OCI-LY7 (cell line): ENCODE measurements at regions of chr2 and their contacts with region 1.

Region 1: DNA sequence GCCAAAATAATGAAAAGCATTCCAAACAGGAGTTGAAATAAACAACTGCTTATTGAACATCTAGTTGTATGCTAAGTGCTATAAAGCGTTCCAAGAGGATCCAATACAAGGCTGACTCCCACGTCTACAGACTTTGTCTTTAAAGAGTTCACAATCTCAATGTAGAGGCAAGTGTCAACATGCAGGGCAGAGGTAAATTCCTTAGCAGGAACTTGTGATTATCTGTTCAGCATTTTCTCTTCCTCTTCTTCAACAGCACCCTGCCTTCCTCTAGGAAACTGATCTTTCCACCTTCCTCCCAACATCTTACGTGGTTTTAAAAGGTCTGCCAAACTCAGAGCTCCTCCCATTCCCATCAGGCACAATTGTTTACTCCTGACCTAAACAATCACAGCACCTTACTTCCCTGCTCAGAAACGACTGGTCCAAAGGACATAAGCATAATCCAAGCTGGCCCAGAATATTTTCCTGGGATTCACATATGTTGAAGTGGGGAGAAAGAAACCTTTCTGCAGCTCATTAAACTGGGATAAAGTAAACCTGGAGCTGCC is 83.9 kb downstream of the ITSN2 start:
- DNase-seq: no peak
- H3K4me3 ChIP-seq: no peak overlapping the region
- H3K27ac ChIP-seq: no peak overlapping the region
- H3K4me1 ChIP-seq: no peaks in the 10 kb centered on the region
- CTCF ChIP-seq: no peak

Region 2: GRCh38 chr2:24262421-24262970 is 13.9 kb before region 1 on chr2:
- CTCF ChIA-PET with region 1: no interaction called
- POLR2A ChIA-PET with region 1: interaction called, 14 read pairs
- intact Hi-C with region 1: no loop called
- DNase-seq: no peak
- H3K4me3 ChIP-seq: no peak overlapping the region
- H3K27ac ChIP-seq: no peak overlapping the region
- H3K4me1 ChIP-seq: peaks cover 7% of the 10 kb centered on the region
- CTCF ChIP-seq: no peak

Region 3: DNA sequence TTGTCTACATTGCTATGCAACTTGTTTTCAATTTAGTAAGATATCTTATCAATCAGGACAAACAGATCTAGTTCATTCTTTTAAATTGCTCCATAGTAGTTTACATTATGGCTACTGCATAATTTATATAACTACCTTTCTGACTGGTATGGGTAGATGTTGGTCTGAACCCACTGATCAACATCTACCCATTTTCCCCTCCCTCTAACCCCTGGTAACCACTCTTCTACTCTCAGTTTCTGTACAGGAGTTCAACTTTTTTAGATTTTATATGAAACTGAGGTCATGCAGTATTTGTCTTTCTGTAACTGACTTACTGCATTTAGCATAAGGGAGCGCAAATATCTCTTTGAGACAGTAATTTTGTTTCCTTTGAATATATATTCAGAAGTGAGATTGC is 10.7 kb after region 1 on chr2:
- CTCF ChIA-PET with region 1: no interaction called
- POLR2A ChIA-PET with region 1: interaction called, 10 read pairs
- intact Hi-C with region 1: no loop called
- DNase-seq: no peak
- H3K4me3 ChIP-seq: no peak overlapping the region
- H3K27ac ChIP-seq: no peak overlapping the region
- H3K4me1 ChIP-seq: no peaks in the 10 kb centered on the region
- CTCF ChIP-seq: no peak

Region 4: DNA sequence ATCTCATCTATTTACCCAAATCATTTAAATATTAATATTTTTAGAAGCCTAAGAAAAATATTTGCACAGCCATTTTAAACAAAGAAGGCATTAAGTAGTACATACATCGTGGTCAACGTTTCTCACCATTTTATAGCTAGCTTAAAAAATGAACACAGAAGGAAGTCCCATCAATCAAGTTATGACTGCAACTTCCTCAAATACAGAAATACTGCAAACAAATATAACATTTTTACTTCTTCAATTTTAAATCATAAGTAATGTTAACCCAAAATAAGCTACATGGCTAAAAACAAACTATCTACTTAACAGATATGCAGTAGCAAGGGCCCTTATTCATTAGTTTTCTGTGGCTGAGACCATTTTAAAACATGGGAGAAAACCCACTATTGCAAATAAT is 53.3 kb after region 1 on chr2:
- CTCF ChIA-PET with region 1: no interaction called
- POLR2A ChIA-PET with region 1: no interaction called
- intact Hi-C with region 1: no loop called
- DNase-seq: peak; percentile 45
- H3K4me3 ChIP-seq: peak overlapping the region; percentile 11
- H3K27ac ChIP-seq: peak overlapping the region; percentile 52
- H3K4me1 ChIP-seq: peaks cover 46% of the 10 kb centered on the region
- CTCF ChIP-seq: no peak

Region 5: DNA sequence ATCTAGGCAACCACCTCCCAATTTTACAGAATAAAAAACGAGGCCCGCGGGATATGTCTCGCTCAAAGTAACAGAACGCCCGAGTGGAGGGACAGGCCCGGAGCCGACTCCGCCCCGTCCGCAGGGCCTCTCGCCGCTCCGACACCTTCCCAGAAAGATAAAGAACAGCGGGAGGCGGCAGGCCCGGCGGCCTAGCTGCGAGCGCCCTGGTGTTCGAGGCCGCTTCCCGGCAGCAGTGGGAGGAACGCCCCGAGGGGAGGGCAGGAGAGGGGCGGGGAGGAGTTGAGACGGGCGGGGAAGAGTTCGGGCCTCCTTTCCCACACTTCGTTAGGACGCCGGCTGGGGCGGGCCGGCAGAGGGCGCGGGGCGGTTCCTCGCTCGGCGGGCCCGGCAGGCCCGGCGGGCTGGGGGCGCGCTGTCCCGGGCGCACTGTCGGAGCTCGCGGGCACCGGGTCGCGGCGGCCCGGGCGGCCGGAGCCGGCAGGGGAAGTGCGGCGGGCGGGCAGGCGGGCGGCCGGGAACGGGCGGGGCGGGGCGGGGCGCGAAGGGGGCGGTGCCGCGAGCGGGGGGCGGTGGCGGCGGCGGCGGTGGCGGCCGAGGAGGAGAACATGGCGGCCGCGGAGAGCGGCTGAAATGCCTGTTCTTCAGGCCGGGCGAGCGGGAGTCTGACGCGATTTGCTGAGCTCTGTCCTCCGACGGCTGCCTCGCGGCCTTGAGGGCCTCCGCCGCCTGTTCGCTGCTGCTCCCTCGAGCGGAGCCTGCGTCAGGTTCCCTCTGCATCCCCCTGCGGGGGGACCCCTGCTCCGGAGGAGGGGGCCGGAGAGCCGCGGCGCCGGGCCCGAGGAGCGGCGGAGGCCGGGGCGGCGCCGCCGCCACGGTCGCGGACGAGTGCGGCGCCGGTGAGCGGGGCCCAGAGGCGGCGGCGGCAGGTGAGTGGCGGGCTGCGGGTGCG is 214.5 kb after region 1 on chr2 and contains the start of gene NCOA1:
- CTCF ChIA-PET with region 1: no interaction called
- POLR2A ChIA-PET with region 1: no interaction called
- intact Hi-C with region 1: no loop called
- DNase-seq: peak; percentile 90
- H3K4me3 ChIP-seq: peak within 1 kb of the TSS; percentile 70
- H3K27ac ChIP-seq: peak within 1 kb of the TSS; percentile 59
- H3K4me1 ChIP-seq: peaks cover 22% of the 10 kb centered on the region
- CTCF ChIP-seq: 0 out of 2 replicates have a peak, but pooled peaks have one; percentile 4
- total RNA-seq, gene NCOA1: 4.3 and 6.1 TPM in 2 replicates

Region 6: GRCh38 chr2:24527536-24527935 is 251.1 kb after region 1 on chr2:
- CTCF ChIA-PET with region 1: no interaction called
- POLR2A ChIA-PET with region 1: no interaction called
- intact Hi-C with region 1: no loop called
- DNase-seq: no peak
- H3K4me3 ChIP-seq: no peak overlapping the region
- H3K27ac ChIP-seq: no peak overlapping the region
- H3K4me1 ChIP-seq: no peaks in the 10 kb centered on the region
- CTCF ChIP-seq: no peak